GM12878 (cell line): ENCODE measurements at regions of chr12 and their contacts with region 1.

Region 1: DNA sequence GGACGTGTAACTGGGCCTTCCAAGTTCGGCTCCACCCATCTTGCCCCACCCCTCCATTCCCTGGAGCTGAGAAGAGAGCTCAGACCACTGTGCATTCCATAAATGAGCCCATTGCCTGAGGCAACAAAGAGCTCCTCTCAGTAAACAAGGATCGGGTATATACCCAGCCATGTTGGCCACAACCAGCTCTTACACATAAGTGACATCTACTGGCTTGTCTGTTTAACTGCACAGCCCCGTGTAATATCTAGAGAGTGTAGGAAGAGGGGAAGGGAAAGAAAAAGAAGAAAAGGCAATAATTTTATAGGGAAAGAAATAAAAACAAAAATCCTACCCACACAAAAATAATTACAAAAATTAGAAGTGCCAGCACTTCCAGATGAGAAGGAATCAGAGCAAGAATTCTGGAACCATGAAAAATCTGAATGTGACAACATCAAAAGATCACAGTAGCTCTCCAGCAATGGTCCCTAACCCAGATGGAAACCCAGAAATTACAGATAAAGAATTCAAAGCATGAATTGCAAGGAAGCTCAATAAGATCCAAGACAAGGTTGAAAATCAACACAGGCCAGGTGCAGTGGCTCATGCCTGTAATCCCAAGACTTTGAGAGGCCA is 308.1 kb downstream of the RPAP3 start:
- DNase-seq: no peak
- ATAC-seq: peak; percentile 91
- H3K4me3 ChIP-seq: no peak overlapping the region
- H3K27ac ChIP-seq: no peak overlapping the region
- H3K4me1 ChIP-seq: no peaks in the 10 kb centered on the region
- H3K27me3 ChIP-seq: no peaks in the 10 kb centered on the region
- CTCF ChIP-seq: peak; percentile 43 to 50 (median 44); a peak in 5 of 6 replicates
- EP300 ChIP-seq: no peak
- POLR2A ChIP-seq: no peak
- RAD21 ChIP-seq: peak; percentile 72

Region 2: DNA sequence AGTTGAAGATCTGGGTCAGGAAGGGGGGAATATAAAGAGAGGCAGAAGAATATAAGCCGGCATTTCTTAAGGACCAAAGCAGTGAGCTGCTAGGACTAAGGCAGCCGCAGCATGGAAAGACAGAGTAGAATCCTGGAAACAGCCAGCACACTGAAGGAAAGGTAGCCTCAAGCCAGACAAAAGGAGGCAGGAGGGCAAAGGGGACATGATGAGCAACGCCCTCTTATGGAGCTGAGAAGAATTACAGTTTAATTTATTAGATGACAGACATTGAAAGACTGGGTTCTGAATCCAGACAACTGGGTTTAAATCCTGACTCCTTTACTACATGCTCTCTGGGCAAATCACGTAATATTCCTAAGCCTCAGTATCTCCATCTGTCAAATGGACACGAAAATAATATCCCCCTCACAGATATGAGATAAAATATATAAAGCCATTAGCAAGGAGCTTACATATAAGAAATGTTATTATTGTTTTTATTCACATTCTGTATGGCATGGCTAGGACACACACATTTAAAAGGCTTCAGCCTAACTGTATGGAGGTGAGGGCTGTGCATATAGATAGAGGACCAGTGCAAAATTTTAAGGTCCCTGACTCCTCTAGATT is 326.4 kb before region 1 on chr12:
- CTCF ChIA-PET with region 1: interaction called, 7 read pairs
- POLR2A ChIA-PET with region 1: no interaction called
- RAD21 ChIA-PET with region 1: no interaction called
- SMC1A ChIA-PET with region 1: interaction called, 14 read pairs
- in situ Hi-C with region 1: no loop called
- intact Hi-C with region 1: no loop called
- DNase-seq: no peak
- ATAC-seq: no peak
- H3K4me3 ChIP-seq: no peak overlapping the region
- H3K27ac ChIP-seq: no peak overlapping the region
- H3K4me1 ChIP-seq: no peaks in the 10 kb centered on the region
- H3K27me3 ChIP-seq: no peaks in the 10 kb centered on the region; a peak in 1 of 4 replicates
- CTCF ChIP-seq: peak; percentile 43 to 45 (median 44); a peak in 5 of 6 replicates
- EP300 ChIP-seq: no peak
- POLR2A ChIP-seq: no peak
- RAD21 ChIP-seq: peak; percentile 22; the same call in 1 of the 2 replicates

Region 3: GRCh38 chr12:47312808-47313426 is 84.9 kb before region 1 on chr12:
- CTCF ChIA-PET with region 1: interaction called, 3 read pairs
- POLR2A ChIA-PET with region 1: no interaction called
- RAD21 ChIA-PET with region 1: no interaction called
- SMC1A ChIA-PET with region 1: interaction called, 3 read pairs
- in situ Hi-C with region 1: no loop called
- intact Hi-C with region 1: loop called (anchors 5 kb)
- DNase-seq: no peak
- ATAC-seq: peak; percentile 96
- H3K4me3 ChIP-seq: no peak overlapping the region
- H3K27ac ChIP-seq: no peak overlapping the region
- H3K4me1 ChIP-seq: peaks cover 4% of the 10 kb centered on the region; the same call in 1 of the 2 replicates
- H3K27me3 ChIP-seq: no peaks in the 10 kb centered on the region
- CTCF ChIP-seq: no peak
- EP300 ChIP-seq: peak in 1 of 2 experiments; percentile 60; a peak in 1 of 4 replicates
- POLR2A ChIP-seq: no peak
- RAD21 ChIP-seq: no peak

Region 4: GRCh38 chr12:47882781-47883546 is 485.2 kb after region 1 on chr12:
- CTCF ChIA-PET with region 1: no interaction called
- POLR2A ChIA-PET with region 1: no interaction called
- RAD21 ChIA-PET with region 1: no interaction called
- SMC1A ChIA-PET with region 1: no interaction called
- in situ Hi-C with region 1: no loop called
- intact Hi-C with region 1: no loop called
- DNase-seq: peak; percentile 77
- ATAC-seq: peak; percentile 73
- H3K4me3 ChIP-seq: peak overlapping the region; percentile 48; the same call in 1 of the 2 replicates
- H3K27ac ChIP-seq: peak overlapping the region; percentile 67
- H3K4me1 ChIP-seq: peaks cover 53% of the 10 kb centered on the region
- H3K27me3 ChIP-seq: no peaks in the 10 kb centered on the region
- CTCF ChIP-seq: no peak
- EP300 ChIP-seq: peak; percentile 89 to 92
- POLR2A ChIP-seq: peak; percentile 43; the same call in 1 of the 2 replicates
- RAD21 ChIP-seq: no peak